ENCODE measurements at regions of chr2 and their contacts with region 1.

Region 1: GRCh38 chr2:105398699-105399432 is at the start of gene FHL2:
- DNase-seq: peak; percentile 77
- H3K4me3 Mint-ChIP-seq: peak within 1 kb of the TSS; percentile 87
- H3K27ac Mint-ChIP-seq: peak within 1 kb of the TSS; percentile 91
- H3K4me1 Mint-ChIP-seq: peaks cover 42% of the 10 kb centered on the region
- H3K27me3 Mint-ChIP-seq: no peaks in the 10 kb centered on the region
- CTCF ChIP-seq: peak; percentile 48
- total RNA-seq, gene FHL2: 77.3 and 93.2 TPM in 2 replicates

Region 2: GRCh38 chr2:105139556-105140239 is 259.2 kb before region 1 on chr2:
- CTCF ChIA-PET with region 1: no interaction called
- POLR2A ChIA-PET with region 1: no interaction called
- intact Hi-C with region 1: no loop called
- DNase-seq: no peak
- H3K4me3 Mint-ChIP-seq: no peak overlapping the region
- H3K27ac Mint-ChIP-seq: no peak overlapping the region
- H3K4me1 Mint-ChIP-seq: no peaks in the 10 kb centered on the region
- H3K27me3 Mint-ChIP-seq: peaks cover 8% of the 10 kb centered on the region
- CTCF ChIP-seq: no peak

Region 3: DNA sequence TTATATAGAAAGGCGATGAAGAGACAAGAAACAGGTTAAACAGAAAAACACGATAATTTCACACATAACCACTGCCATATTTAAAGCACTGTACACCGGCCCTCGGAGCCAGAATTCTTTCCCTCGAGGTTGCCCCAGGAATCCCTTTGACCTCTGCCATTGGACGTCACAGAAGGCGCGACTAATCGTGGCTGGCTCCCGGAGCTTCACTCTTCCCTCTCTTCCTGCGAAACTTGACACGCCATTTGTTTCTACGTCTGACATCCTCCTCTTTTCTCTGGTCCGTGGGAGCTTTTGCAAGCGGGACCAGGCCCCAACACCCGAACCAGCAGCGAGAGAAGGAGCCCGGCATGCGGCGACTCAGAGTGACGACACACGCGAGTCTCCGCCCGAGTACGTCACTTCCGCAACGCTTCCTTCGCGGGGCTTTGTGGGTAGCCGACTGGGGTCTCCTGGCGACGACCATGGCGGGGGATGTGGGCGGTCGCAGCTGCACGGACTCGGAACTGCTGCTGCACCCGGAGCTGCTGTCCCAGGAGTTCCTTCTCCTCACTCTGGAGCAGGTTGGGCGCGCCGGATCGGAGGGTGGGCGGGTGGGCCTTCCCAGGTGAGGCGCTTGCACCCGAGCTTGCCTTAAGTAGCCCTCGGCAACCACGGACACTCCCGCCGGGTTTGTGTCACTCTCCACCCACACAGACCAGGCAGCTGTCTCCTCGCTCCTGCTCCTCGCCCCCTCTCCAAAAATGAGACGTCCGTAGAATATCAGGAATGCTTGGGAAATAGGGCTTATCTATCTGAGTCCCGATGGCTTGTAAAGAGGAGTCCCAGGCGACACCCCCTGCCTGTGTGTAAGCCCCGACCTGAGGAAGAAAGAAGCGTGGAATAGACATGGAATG is 61.5 kb before region 1 on chr2 and contains the start of gene C2orf49:
- CTCF ChIA-PET with region 1: no interaction called
- POLR2A ChIA-PET with region 1: interaction called, 25 read pairs
- intact Hi-C with region 1: no loop called
- DNase-seq: peak; percentile 86
- H3K4me3 Mint-ChIP-seq: peak within 1 kb of the TSS; percentile 86
- H3K27ac Mint-ChIP-seq: peak within 1 kb of the TSS; percentile 100
- H3K4me1 Mint-ChIP-seq: peaks cover 13% of the 10 kb centered on the region
- H3K27me3 Mint-ChIP-seq: no peaks in the 10 kb centered on the region
- CTCF ChIP-seq: no peak
- total RNA-seq, gene C2orf49: 24.2 and 24.5 TPM in 2 replicates

Region 4: GRCh38 chr2:105358593-105358992 is 40.3 kb before region 1 on chr2:
- CTCF ChIA-PET with region 1: no interaction called
- POLR2A ChIA-PET with region 1: interaction called, 3 read pairs
- intact Hi-C with region 1: loop called (anchors 5 kb)
- DNase-seq: no peak
- H3K4me3 Mint-ChIP-seq: no peak overlapping the region
- H3K27ac Mint-ChIP-seq: no peak overlapping the region
- H3K4me1 Mint-ChIP-seq: peaks cover 5% of the 10 kb centered on the region
- H3K27me3 Mint-ChIP-seq: no peaks in the 10 kb centered on the region
- CTCF ChIP-seq: no peak

Region 5: DNA sequence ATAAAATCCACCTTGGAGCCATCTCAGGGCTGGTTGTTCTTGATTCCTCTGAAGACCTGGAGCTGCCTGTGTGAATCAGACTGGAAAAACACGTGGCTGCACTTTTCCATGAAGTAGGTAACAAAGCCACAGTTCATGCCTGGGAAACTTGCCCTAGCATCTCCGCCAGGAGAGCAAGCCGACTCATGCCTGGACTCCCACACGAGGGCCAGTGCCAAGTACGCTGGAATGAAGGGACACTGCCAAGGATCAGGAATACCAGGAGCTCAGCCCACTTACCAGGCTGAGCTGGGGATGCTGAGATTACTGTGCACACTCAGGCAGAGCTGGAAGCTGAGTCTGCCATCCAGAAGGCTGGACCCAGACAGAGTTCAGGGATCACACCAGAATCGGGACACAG is 10.9 kb after region 1 on chr2:
- CTCF ChIA-PET with region 1: interaction called, 10 read pairs
- POLR2A ChIA-PET with region 1: interaction called, 119 read pairs
- intact Hi-C with region 1: no loop called
- DNase-seq: peak; percentile 99
- H3K4me3 Mint-ChIP-seq: peak overlapping the region; percentile 36
- H3K27ac Mint-ChIP-seq: no peak overlapping the region
- H3K4me1 Mint-ChIP-seq: peaks cover 42% of the 10 kb centered on the region
- H3K27me3 Mint-ChIP-seq: no peaks in the 10 kb centered on the region
- CTCF ChIP-seq: no peak

Region 6: DNA sequence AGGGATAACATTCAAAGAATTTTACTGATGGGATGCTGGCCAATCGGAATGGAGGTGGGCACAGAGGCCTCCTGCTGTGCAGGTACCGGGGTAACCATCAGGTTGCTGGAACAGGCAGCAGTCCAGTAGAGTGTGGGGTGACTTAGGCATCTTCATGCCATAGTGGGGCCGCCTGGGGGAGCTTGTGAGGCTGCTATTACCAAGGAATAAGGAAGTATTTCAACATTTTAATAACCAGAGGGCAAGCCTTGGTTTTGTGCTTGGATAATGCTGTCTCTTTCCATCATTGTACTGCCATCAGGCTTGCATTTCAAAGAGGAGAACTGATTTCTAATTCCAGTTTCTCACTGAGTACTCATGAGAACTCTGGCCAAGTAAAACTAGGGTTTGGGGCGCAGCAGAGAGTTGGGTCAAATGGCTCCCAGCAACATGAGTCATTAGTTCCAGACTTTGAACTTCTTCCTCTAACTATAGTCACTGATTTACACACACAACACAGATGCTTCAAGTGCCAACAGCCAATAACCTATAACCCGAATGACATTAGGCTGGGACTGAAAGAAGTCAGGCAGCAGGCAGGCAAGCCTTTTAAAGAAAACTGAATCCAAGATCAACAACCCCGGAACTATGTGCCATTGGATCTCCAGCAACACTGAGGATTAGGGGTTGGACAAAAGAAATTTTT is 56.1 kb after region 1 on chr2:
- CTCF ChIA-PET with region 1: interaction called, 5 read pairs
- POLR2A ChIA-PET with region 1: interaction called, 29 read pairs
- intact Hi-C with region 1: loop called (anchors 1 kb)
- DNase-seq: peak; percentile 95
- H3K4me3 Mint-ChIP-seq: peak overlapping the region; percentile 15
- H3K27ac Mint-ChIP-seq: peak overlapping the region; percentile 91
- H3K4me1 Mint-ChIP-seq: peaks cover 28% of the 10 kb centered on the region
- H3K27me3 Mint-ChIP-seq: no peaks in the 10 kb centered on the region
- CTCF ChIP-seq: peak; percentile 68

Region 7: GRCh38 chr2:105510761-105511610 is 112.1 kb after region 1 on chr2:
- CTCF ChIA-PET with region 1: interaction called, 3 read pairs
- POLR2A ChIA-PET with region 1: interaction called, 7 read pairs
- intact Hi-C with region 1: loop called (anchors 5 kb)
- DNase-seq: peak; percentile 72
- H3K4me3 Mint-ChIP-seq: no peak overlapping the region
- H3K27ac Mint-ChIP-seq: no peak overlapping the region
- H3K4me1 Mint-ChIP-seq: peaks cover 15% of the 10 kb centered on the region
- H3K27me3 Mint-ChIP-seq: no peaks in the 10 kb centered on the region
- CTCF ChIP-seq: no peak